ENCODE measurements at regions of chr17 and their contacts with region 1.

Region 1: GRCh38 chr17:57597531-57598453 is 147.3 kb downstream of the CCDC182 start:
- DNase-seq: peak in 5 of 9 experiments; percentile 33 to 66 (median 57)
- ATAC-seq: no peak
- H3K4me3 ChIP-seq: no peak overlapping the region
- H3K4me3 Mint-ChIP-seq: no peak overlapping the region
- H3K27ac ChIP-seq: peak overlapping the region in 1 of 2 experiments; percentile 32
- H3K27ac Mint-ChIP-seq: peak overlapping the region; percentile 89
- H3K4me1 ChIP-seq: peaks cover 52% of the 10 kb centered on the region
- H3K4me1 Mint-ChIP-seq: peaks cover 58% of the 10 kb centered on the region
- H3K27me3 ChIP-seq: no peaks in the 10 kb centered on the region
- H3K27me3 Mint-ChIP-seq: no peaks in the 10 kb centered on the region
- CTCF ChIP-seq: peak; percentile 64

Region 2: DNA sequence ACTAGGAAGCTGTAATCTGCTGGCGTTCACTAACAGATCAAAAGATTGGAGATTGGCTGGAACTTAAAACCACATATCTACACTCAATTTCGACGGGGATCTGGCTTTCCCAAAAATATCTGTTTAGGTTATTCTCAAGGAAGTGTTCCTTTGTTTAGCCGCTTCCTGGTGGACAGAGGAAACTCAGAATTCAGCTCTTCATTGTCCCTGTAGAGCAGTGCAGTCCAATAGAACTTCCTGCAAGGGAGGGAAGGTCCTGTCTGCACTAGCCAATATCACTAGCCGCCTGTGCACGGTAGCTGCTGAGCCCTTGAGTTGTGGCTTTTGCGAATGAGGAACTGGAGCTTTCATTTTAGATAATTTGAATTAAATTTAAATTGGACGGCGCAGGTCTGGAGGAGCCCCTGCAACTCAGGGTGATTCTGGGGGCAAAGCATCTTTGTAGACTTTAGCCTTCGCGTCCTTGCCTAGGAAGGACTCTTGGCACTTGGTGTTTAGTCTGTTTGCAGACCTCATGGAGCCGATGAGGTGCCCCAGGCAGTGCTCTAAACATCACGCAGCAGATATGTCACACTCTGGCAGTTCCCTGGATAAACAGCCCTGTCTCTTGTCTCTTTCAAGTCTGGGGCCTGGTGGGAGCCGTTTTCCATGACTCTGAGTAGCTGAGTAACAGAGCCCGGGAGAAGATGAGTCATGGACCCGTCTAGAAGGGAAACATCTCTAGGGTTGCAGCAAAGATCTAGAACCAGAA is 25.1 kb after region 1 on chr17:
- CTCF ChIA-PET with region 1: interaction called, 23 read pairs
- POLR2A ChIA-PET with region 1: interaction called, 3 read pairs
- intact Hi-C with region 1: no loop called
- DNase-seq: no peak
- ATAC-seq: no peak
- H3K4me3 ChIP-seq: no peak overlapping the region
- H3K4me3 Mint-ChIP-seq: no peak overlapping the region
- H3K27ac ChIP-seq: no peak overlapping the region
- H3K27ac Mint-ChIP-seq: no peak overlapping the region
- H3K4me1 ChIP-seq: no peaks in the 10 kb centered on the region
- H3K4me1 Mint-ChIP-seq: peaks cover 12% of the 10 kb centered on the region
- H3K27me3 ChIP-seq: no peaks in the 10 kb centered on the region
- H3K27me3 Mint-ChIP-seq: no peaks in the 10 kb centered on the region
- CTCF ChIP-seq: no peak

Region 3: GRCh38 chr17:57739402-57740392 is 141.9 kb after region 1 on chr17:
- CTCF ChIA-PET with region 1: interaction called, 39 read pairs
- POLR2A ChIA-PET with region 1: no interaction called
- intact Hi-C with region 1: no loop called
- DNase-seq: peak in 2 of 9 experiments; percentile 40 to 58
- ATAC-seq: no peak
- H3K4me3 ChIP-seq: no peak overlapping the region
- H3K4me3 Mint-ChIP-seq: no peak overlapping the region
- H3K27ac ChIP-seq: no peak overlapping the region
- H3K27ac Mint-ChIP-seq: no peak overlapping the region
- H3K4me1 ChIP-seq: no peaks in the 10 kb centered on the region
- H3K4me1 Mint-ChIP-seq: peaks cover 10% of the 10 kb centered on the region
- H3K27me3 ChIP-seq: no peaks in the 10 kb centered on the region
- H3K27me3 Mint-ChIP-seq: no peaks in the 10 kb centered on the region
- CTCF ChIP-seq: no peak

Region 4: DNA sequence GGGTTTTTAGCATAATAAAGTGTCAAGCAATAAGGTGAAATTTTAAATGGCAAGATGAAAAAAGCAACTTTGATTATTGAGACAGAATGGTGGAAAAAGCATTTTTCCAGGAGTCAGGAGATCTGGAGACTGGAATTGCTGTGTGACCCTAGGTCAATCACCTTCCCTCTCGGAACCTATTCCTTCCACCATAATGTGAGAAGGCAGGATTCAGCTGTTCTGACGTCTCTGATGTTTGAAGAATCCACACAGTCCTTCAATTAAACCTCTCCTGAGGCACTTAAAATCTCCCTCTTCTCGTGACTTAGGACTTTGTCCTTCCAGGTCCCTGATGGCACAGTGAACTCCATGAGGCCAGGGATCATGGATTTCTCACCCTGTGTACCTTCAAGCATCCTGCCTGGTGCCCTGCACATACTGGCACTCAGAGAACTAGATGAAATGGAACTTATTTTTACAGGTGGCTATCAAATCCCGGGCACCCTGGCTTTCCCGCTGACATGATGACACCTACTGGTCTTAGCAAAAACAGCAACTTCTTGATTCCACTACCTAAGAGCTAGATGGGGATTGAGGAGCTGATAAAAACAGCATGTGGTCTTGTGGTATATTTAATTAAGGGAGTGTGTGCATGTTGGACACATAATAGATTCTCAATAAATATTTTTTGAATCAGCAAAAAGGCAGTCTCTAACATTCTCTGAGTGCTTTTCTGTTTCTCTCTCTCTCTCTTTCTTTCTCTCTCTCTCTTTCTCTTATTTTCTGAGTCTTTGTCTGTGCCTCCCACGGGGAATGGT is 149.6 kb after region 1 on chr17:
- CTCF ChIA-PET with region 1: interaction called, 42 read pairs
- POLR2A ChIA-PET with region 1: no interaction called
- intact Hi-C with region 1: loop called (anchors 1 to 2 kb)
- DNase-seq: peak in 7 of 9 experiments; percentile 3 to 77 (median 52)
- ATAC-seq: peak; percentile 77
- H3K4me3 ChIP-seq: no peak overlapping the region
- H3K4me3 Mint-ChIP-seq: no peak overlapping the region
- H3K27ac ChIP-seq: no peak overlapping the region
- H3K27ac Mint-ChIP-seq: no peak overlapping the region
- H3K4me1 ChIP-seq: peaks cover 6% of the 10 kb centered on the region
- H3K4me1 Mint-ChIP-seq: peaks cover 10% of the 10 kb centered on the region
- H3K27me3 ChIP-seq: no peaks in the 10 kb centered on the region
- H3K27me3 Mint-ChIP-seq: no peaks in the 10 kb centered on the region
- CTCF ChIP-seq: peak; percentile 81

Measured in CD8-positive, alpha-beta T cell (primary cell).